Activated CD4-positive, alpha-beta T cell treated with anti-CD3 and anti-CD28 coated beads, Interleukin-2, amount 10 ng/mL, durations not matched to agents 24 days and 14 days (primary cell): ENCODE measurements at regions of chr14 and their contacts with region 1.

Region 1: GRCh38 chr14:61761959-61762786 is at the start of gene SNAPC1:
- DNase-seq: peak; percentile 100
- H3K4me3 Mint-ChIP-seq: peak within 1 kb of the TSS; percentile 88
- H3K27ac Mint-ChIP-seq: peak within 1 kb of the TSS; percentile 97
- H3K4me1 Mint-ChIP-seq: peaks cover 40% of the 10 kb centered on the region
- H3K27me3 Mint-ChIP-seq: no peaks in the 10 kb centered on the region
- total RNA-seq, gene SNAPC1: 12.1 and 12.3 TPM in 2 replicates

Region 2: GRCh38 chr14:61780125-61780524 is 18.0 kb after region 1 on chr14:
- intact Hi-C with region 1: loop called (anchors 2 kb)
- DNase-seq: peak; percentile 83
- H3K4me3 Mint-ChIP-seq: peak overlapping the region; percentile 79
- H3K27ac Mint-ChIP-seq: peak overlapping the region; percentile 94
- H3K4me1 Mint-ChIP-seq: peaks cover 40% of the 10 kb centered on the region
- H3K27me3 Mint-ChIP-seq: no peaks in the 10 kb centered on the region